Left cardiac atrium (tissue), 4 donors: ENCODE measurements at regions of chr13 and their contacts with region 1.

Region 1: GRCh38 chr13:100827489-100828176 is 153.0 kb upstream of the TMTC4 start:
- DNase-seq: no peak
- ATAC-seq: no peak

Region 2: GRCh38 chr13:100798739-100799361 is 28.8 kb before region 1 on chr13:
- intact Hi-C with region 1: loop called in 1 of 2 experiments (anchors 2 kb)
- DNase-seq: no peak
- ATAC-seq: no peak

Region 3: DNA sequence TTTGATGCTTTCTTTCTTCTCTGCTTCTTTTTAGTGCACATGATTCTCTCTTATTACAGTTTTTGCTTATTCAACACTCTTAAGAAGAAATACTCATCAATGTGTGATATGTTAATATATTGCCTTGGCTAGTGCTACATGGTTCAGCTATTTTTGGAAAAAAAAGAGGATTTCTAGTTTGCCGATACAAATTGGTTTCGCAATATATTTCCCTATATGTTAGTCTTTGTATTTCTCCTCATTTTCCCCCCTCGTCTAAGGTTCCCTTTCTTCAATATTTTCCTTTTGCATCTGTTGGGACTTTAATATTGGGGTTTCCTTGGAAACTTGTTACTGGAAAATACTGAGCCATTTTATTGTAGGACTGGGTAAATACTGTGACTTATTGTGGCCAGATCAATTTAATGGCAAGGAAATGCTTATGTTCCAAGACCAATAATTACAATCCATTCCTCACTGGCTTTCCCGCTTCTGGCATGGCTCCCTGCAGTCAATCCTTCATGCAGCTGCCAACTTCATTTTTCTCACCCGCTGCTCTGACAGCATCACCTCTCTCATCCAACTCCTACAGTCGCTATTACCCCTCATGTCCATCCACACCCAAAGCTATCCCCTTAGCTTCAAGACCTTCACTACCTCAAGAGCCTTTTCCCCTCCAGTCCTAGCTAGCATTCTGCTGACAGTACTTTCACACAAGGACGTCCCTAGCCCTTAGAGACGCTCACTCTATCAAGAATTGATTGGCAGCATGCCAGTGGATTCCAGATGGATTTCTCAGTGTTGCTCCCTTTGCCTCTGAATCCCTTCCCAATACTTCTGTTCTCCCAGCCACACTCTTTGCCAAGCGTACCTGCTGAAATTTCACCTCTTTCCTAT is 127.0 kb after region 1 on chr13:
- intact Hi-C with region 1: no loop called
- DNase-seq: no peak
- ATAC-seq: no peak

Region 4: GRCh38 chr13:101127741-101128353 is 300.2 kb after region 1 on chr13:
- intact Hi-C with region 1: no loop called
- DNase-seq: no peak
- ATAC-seq: peak in 1 of 2 donors; percentile 51